Mammary epithelial cell (primary cell): ENCODE measurements at regions of chr12 and their contacts with region 1.

Region 1: GRCh38 chr12:65602610-65603295 is 221.5 kb upstream of the HMGA2 start:
- DNase-seq: peak; percentile 94
- H3K4me3 ChIP-seq: peak overlapping the region; percentile 39 to 60 (median 43)
- H3K27ac ChIP-seq: peak overlapping the region; percentile 98
- H3K4me1 ChIP-seq: peaks cover 48% of the 10 kb centered on the region
- H3K27me3 ChIP-seq: no peaks in the 10 kb centered on the region
- CTCF ChIP-seq: peak; percentile 76 to 84

Region 2: GRCh38 chr12:65495233-65495632 is 107.5 kb before region 1 on chr12:
- CTCF ChIA-PET with region 1: no interaction called
- dilution Hi-C with region 1: no loop called
- in situ Hi-C with region 1: no loop called
- intact Hi-C with region 1: no loop called
- DNase-seq: peak; percentile 64
- H3K4me3 ChIP-seq: no peak overlapping the region
- H3K27ac ChIP-seq: no peak overlapping the region
- H3K4me1 ChIP-seq: peaks cover 15% of the 10 kb centered on the region
- H3K27me3 ChIP-seq: no peaks in the 10 kb centered on the region
- CTCF ChIP-seq: no peak

Region 3: GRCh38 chr12:65556681-65557437 is 45.9 kb before region 1 on chr12:
- CTCF ChIA-PET with region 1: interaction called, 22 read pairs
- dilution Hi-C with region 1: no loop called
- in situ Hi-C with region 1: no loop called
- intact Hi-C with region 1: loop called (anchors 1 kb)
- DNase-seq: peak; percentile 94
- H3K4me3 ChIP-seq: no peak overlapping the region
- H3K27ac ChIP-seq: peak overlapping the region; percentile 77
- H3K4me1 ChIP-seq: peaks cover 26% of the 10 kb centered on the region
- H3K27me3 ChIP-seq: no peaks in the 10 kb centered on the region
- CTCF ChIP-seq: peak; percentile 94 to 98

Region 4: GRCh38 chr12:65568517-65568916 is 34.2 kb before region 1 on chr12:
- CTCF ChIA-PET with region 1: no interaction called
- dilution Hi-C with region 1: no loop called
- in situ Hi-C with region 1: no loop called
- intact Hi-C with region 1: no loop called
- DNase-seq: peak; percentile 26
- H3K4me3 ChIP-seq: no peak overlapping the region
- H3K27ac ChIP-seq: no peak overlapping the region
- H3K4me1 ChIP-seq: peaks cover 32% of the 10 kb centered on the region
- H3K27me3 ChIP-seq: no peaks in the 10 kb centered on the region
- CTCF ChIP-seq: no peak

Region 5: GRCh38 chr12:65649126-65649525 is 46.4 kb after region 1 on chr12:
- CTCF ChIA-PET with region 1: no interaction called
- dilution Hi-C with region 1: no loop called
- in situ Hi-C with region 1: no loop called
- intact Hi-C with region 1: loop called (anchors 2 kb)
- DNase-seq: peak; percentile 99
- H3K4me3 ChIP-seq: no peak overlapping the region
- H3K27ac ChIP-seq: peak overlapping the region; percentile 93
- H3K4me1 ChIP-seq: peaks cover 31% of the 10 kb centered on the region
- H3K27me3 ChIP-seq: no peaks in the 10 kb centered on the region
- CTCF ChIP-seq: no peak

Region 6: DNA sequence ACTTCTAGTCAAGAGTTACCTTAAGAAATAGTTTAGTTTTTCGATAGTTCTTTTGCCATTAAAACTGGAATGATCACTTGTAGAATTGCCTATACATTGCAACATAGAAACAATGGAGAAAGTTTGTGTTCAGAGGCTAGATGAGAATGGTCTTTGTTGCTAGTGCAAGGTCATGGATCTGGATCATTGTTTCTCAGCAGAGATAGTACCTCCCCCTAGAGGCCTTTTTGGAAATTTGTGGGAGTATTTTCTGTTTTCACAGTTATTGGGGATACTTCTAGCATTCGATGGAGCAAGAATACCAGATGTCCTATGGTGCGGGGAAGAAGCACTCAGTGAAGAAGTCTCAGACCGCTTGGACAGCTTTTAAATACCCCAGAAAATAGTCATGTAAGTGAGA is 82.8 kb after region 1 on chr12:
- CTCF ChIA-PET with region 1: interaction called, 4 read pairs
- dilution Hi-C with region 1: no loop called
- in situ Hi-C with region 1: no loop called
- intact Hi-C with region 1: loop called (anchors 1 kb)
- DNase-seq: peak; percentile 48
- H3K4me3 ChIP-seq: no peak overlapping the region
- H3K27ac ChIP-seq: no peak overlapping the region
- H3K4me1 ChIP-seq: peaks cover 8% of the 10 kb centered on the region
- H3K27me3 ChIP-seq: no peaks in the 10 kb centered on the region
- CTCF ChIP-seq: peak; percentile 53 to 68

Region 7: DNA sequence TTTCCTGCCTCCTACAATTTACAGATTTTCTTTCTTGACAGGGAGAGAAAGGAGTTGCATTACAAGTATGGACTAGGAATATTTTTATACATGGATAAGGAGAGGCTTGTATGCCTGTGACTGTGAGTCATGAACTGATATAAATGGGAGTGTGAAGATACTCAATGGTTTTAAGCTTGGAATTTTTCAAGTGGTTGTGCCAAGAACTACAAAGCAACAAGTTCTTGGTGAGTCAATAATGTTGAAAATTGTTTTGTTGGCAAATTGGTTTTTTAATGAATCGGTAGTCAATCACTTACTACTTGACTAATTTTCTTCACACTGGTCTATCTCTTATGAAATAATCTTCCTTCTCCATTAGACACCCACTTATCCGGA is 162.7 kb after region 1 on chr12:
- CTCF ChIA-PET with region 1: no interaction called
- dilution Hi-C with region 1: no loop called
- in situ Hi-C with region 1: no loop called
- intact Hi-C with region 1: loop called (anchors 1 kb)
- DNase-seq: peak; percentile 91
- H3K4me3 ChIP-seq: peak overlapping the region in 2 of 3 experiments; percentile 7 to 19
- H3K27ac ChIP-seq: peak overlapping the region; percentile 96
- H3K4me1 ChIP-seq: peaks cover 39% of the 10 kb centered on the region
- H3K27me3 ChIP-seq: no peaks in the 10 kb centered on the region
- CTCF ChIP-seq: no peak

Region 8: GRCh38 chr12:65986047-65986446 is 383.3 kb after region 1 on chr12:
- CTCF ChIA-PET with region 1: no interaction called
- dilution Hi-C with region 1: no loop called
- in situ Hi-C with region 1: no loop called
- intact Hi-C with region 1: loop called (anchors 1 kb)
- DNase-seq: no peak
- H3K4me3 ChIP-seq: no peak overlapping the region
- H3K27ac ChIP-seq: no peak overlapping the region
- H3K4me1 ChIP-seq: no peaks in the 10 kb centered on the region
- H3K27me3 ChIP-seq: no peaks in the 10 kb centered on the region
- CTCF ChIP-seq: no peak